MCF 10A (cell line): ENCODE measurements at regions of chr7 and their contacts with region 1.

Region 1: GRCh38 chr7:119812737-119813136 is 460.2 kb upstream of the KCND2 start:
- DNase-seq: no peak
- H3K4me3 Mint-ChIP-seq: no peak overlapping the region
- H3K27ac Mint-ChIP-seq: no peak overlapping the region
- H3K4me1 Mint-ChIP-seq: no peaks in the 10 kb centered on the region
- H3K27me3 Mint-ChIP-seq: peaks cover 55% of the 10 kb centered on the region
- CTCF ChIP-seq: no peak

Region 2: DNA sequence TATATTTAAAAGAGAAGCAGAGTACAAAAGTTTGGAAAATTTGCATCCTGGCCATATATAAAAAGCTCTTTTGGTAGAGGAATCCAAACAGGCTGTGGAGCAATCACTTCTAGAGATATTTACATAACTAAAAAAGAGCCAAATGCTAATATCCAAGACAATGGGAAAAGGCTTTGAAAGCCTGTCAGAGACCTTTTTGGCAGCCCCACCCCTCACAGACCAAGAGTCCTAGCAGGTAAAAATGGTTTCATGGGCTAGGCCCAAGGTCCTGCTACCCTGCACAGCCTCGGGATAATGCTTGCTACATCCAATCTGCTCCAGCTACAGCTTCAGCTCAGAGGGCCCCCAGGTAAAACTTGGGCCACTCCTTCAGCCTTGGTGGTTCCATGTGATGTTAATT is 30.0 kb after region 1 on chr7:
- CTCF ChIA-PET with region 1: no interaction called
- POLR2A ChIA-PET with region 1: no interaction called
- intact Hi-C with region 1: loop called (anchors 2 kb)
- DNase-seq: no peak
- H3K4me3 Mint-ChIP-seq: no peak overlapping the region
- H3K27ac Mint-ChIP-seq: no peak overlapping the region
- H3K4me1 Mint-ChIP-seq: no peaks in the 10 kb centered on the region
- H3K27me3 Mint-ChIP-seq: peaks cover 30% of the 10 kb centered on the region
- CTCF ChIP-seq: no peak

Region 3: GRCh38 chr7:120344276-120344675 is 531.5 kb after region 1 on chr7:
- CTCF ChIA-PET with region 1: no interaction called
- POLR2A ChIA-PET with region 1: no interaction called
- intact Hi-C with region 1: no loop called
- DNase-seq: no peak
- H3K4me3 Mint-ChIP-seq: no peak overlapping the region
- H3K27ac Mint-ChIP-seq: no peak overlapping the region
- H3K4me1 Mint-ChIP-seq: no peaks in the 10 kb centered on the region
- H3K27me3 Mint-ChIP-seq: peaks cover 42% of the 10 kb centered on the region
- CTCF ChIP-seq: no peak